Prostate gland (tissue), 2 donors: ENCODE measurements at regions of chr5 and their contacts with region 1.

Region 1: GRCh38 chr5:83473346-83474163 is 2.0 kb downstream of the VCAN start:
- DNase-seq: peak; percentile 65
- H3K4me3 ChIP-seq: peak overlapping the region; percentile 23 to 28
- H3K27ac ChIP-seq: peak overlapping the region; percentile 13 to 59
- H3K4me1 ChIP-seq: peaks cover 5% of the 10 kb centered on the region
- H3K27me3 ChIP-seq: peaks cover 20% of the 10 kb centered on the region
- CTCF ChIP-seq: peak in 3 of 4 experiments; percentile 37 to 67 (median 62)
- POLR2A ChIP-seq: no peak

Region 2: DNA sequence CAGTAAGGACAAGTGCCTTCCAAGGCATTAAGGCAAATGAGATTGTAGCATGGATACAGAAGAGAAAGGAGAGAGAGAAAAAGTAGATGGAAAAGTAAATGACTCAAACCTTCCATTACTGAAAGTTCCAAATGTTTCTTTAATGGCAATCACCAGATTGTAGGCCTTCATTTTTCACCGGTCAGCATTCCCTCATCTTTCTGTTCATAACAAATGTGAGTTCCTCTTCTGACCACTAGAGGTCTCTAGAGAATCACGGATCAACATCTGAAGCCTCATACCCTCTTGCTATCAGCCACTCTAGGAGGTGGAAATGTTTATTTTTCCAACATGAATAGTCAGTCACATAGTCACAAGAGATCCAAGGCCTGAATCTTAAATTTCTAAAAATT is 1121.8 kb before region 1 on chr5:
- intact Hi-C with region 1: loop called (anchors 10 kb)
- DNase-seq: peak; percentile 26
- H3K4me3 ChIP-seq: no peak overlapping the region
- H3K27ac ChIP-seq: no peak overlapping the region
- H3K4me1 ChIP-seq: no peaks in the 10 kb centered on the region
- H3K27me3 ChIP-seq: no peaks in the 10 kb centered on the region
- CTCF ChIP-seq: peak; percentile 45 to 90 (median 75)
- POLR2A ChIP-seq: no peak

Region 3: GRCh38 chr5:83553000-83553486 is 79.5 kb after region 1 on chr5:
- intact Hi-C with region 1: loop called (anchors 5 kb)
- DNase-seq: no peak
- H3K4me3 ChIP-seq: no peak overlapping the region
- H3K27ac ChIP-seq: no peak overlapping the region
- H3K4me1 ChIP-seq: no peaks in the 10 kb centered on the region
- H3K27me3 ChIP-seq: no peaks in the 10 kb centered on the region
- CTCF ChIP-seq: no peak
- POLR2A ChIP-seq: no peak

Region 4: DNA sequence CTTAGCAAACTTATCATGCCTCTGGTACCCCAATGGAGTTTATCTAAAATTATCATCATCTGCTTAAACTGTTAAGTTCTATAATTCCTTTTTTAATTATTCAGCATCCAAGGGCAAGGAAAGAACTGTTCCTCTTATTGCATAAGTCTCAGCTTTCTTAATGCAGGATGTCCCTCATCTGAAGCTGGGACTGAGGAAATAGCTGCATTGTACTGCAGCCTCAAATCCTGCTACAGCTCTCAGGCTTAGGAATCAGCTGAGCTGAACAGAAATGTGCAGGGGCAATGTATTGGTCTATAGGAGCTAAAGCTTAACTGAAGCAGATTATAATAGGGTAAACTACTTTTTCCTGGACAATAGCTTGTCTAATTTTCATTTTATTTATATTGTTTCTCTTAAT is 199.1 kb after region 1 on chr5:
- intact Hi-C with region 1: no loop called
- DNase-seq: no peak
- H3K4me3 ChIP-seq: no peak overlapping the region
- H3K27ac ChIP-seq: no peak overlapping the region
- H3K4me1 ChIP-seq: no peaks in the 10 kb centered on the region
- H3K27me3 ChIP-seq: no peaks in the 10 kb centered on the region
- CTCF ChIP-seq: no peak
- POLR2A ChIP-seq: no peak